Dorsolateral prefrontal cortex (tissue), 120 donors: ENCODE measurements at regions of chr2 and their contacts with region 1.

Region 1: DNA sequence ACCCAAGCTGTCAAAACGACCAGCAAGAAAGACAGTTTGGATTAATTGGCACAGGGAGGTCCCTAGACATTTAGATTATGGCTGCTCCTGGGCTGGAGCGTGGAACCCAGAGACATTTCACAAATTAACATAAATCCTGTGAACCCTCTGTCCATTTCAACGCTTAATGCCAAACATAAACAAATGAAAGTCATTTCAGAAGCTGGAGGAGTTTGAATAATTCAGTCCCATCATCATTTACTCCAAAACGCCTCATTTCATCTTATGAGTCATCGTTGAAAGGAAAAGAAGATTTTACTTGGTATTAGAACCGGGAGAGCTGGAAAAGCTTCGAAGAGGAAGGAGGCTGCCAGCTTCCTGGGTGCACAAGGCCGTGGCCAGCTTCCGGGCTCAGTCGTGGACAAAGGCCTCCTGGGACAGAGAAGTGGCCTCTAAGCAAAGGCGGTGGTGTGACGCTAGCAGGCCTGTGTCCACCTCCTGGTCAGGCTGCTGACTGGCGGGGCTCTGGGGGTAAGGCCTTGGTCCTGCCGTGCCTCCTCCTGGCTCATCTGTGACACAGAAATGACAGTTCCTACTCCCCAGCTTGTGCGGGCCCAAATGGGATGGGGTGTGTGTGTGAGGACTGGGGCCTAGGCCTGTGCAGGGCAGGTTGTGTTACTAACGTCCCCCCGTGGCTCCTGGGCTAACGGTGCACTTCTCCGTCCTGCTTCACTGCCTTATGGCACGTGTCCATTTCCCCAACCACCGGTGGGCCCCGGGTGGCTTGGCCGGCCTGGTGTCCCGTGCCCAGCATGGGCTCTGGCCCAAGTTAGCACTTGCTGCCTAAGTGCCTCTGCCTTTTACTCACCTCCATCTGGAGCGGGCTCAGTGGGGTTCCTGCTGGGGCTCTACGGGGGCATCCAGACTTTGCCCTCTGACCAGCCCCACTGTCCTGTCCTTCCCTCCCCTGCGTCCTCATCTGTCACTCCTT is 71.6 kb downstream of the RRM2 start:
- DNase-seq: no peak
- H3K4me3 ChIP-seq: no peak overlapping the region
- H3K27ac ChIP-seq: peak overlapping the region in 3 of 59 donors; percentile 13 to 35 (median 22)
- H3K27me3 ChIP-seq: peaks cover 0 to 2% (median 0%) of the 10 kb centered on the region in 45 donors
- CTCF ChIP-seq: no peak

Region 2: DNA sequence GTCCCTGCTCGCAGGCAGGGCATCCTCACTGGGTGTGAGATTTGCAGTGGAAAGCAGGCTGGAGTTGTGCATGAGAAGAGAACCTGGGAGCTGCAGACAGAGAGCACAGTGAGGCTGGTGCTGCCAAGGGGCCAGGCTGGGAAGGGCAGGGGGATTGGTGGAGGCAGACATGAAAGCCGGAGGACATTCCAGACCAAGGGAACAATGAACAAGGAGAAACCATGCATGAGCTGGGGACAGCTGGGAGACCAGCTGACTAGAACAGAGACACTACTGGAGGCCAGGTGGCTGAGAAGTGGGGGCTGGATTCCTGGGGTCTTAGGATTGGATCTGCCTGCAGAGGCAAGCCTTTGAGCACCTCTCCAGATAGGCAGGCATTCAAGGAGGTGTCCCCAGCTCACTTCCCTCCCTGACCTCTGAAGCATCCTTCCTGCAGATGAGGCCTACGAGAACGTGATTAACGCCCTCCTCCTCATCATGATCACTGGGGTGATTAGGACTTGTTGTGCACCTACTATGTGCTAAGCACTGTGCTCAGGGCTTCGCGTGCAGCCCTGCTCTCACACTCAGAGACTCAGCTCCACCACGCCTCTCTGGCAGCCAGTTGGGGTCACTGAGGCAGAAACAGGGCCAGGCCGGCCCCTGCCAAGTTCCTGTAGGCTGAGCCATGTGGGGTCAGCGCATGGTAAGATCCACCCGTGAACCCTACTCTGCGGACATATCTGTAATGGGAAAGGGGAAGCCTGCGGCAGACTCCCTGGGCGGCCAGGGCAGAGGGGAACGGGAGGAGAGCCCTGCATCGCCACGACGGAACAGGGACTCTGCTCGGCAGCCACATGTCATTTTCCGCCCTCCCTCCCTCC is 886.3 kb after region 1 on chr2:
- intact Hi-C with region 1: loop called in 1 of 2 experiments (anchors 10 kb)
- DNase-seq: peak in 3 of 10 donors; percentile 43 to 59 (median 52)
- H3K4me3 ChIP-seq: no peak overlapping the region
- H3K27ac ChIP-seq: peak overlapping the region in 9 of 59 donors; percentile 6 to 65 (median 26)
- H3K27me3 ChIP-seq: peaks cover 0 to 3% (median 0%) of the 10 kb centered on the region in 45 donors
- CTCF ChIP-seq: no peak